ENCODE measurements at regions of chr5 and their contacts with region 1.

Region 1: GRCh38 chr5:69234457-69235268 is at the start of gene CDK7:
- DNase-seq: peak; percentile 88 to 95 (median 90)
- H3K4me3 ChIP-seq: peak within 1 kb of the TSS; percentile 93 to 97
- H3K4me3 Mint-ChIP-seq: peak within 1 kb of the TSS; percentile 92 to 99 (median 98)
- H3K27ac ChIP-seq: peak within 1 kb of the TSS; percentile 91
- H3K27ac Mint-ChIP-seq: peak within 1 kb of the TSS; percentile 83 to 97 (median 96)
- H3K4me1 ChIP-seq: peaks cover 31% of the 10 kb centered on the region
- H3K4me1 Mint-ChIP-seq: peaks cover 26 to 58% (median 40%) of the 10 kb centered on the region in 4 donors
- H3K27me3 ChIP-seq: no peaks in the 10 kb centered on the region
- H3K27me3 Mint-ChIP-seq: no peaks in the 10 kb centered on the region
- total RNA-seq, gene CDK7: 16.5 to 20.2 TPM

Region 2: DNA sequence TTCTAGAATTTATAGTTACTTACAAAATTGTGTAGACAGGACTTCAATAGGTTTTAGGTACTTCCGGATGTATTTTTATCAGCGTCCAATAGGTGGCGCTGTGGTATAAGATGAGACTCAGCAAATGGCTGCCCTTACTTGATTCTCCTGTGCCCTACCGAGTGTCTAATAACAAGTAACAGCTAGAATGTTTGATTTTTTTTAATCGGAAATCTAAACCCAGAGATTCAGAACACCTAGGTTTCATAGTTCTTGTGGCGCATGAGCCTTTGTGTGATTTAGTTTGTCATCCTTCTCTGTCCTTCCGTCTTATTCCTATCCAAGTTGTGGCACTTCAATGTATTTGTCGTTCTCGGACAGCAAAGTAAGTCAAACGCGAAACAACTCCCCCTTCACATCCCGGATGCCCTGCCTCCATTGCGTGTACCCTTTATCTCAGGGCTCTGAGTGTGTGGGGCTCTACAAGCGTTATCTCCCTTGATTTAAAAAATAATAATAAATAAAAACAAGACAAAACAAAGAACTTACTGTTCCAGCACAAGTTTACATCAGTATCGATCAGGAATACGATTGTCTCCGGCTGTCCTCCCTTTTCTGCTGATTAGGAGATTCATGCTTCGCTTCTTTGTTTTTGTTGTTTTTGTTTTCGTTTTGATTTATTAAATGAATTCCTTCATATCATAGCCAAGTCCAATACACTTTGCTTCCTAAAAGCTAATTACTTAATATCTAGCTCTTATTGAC is 191.6 kb before region 1 on chr5:
- CTCF ChIA-PET with region 1: interaction called, 7 read pairs
- POLR2A ChIA-PET with region 1: interaction called, 4 read pairs
- intact Hi-C with region 1: loop called (anchors 5 kb)
- DNase-seq: peak; percentile 84 to 90 (median 88)
- H3K4me3 ChIP-seq: peak overlapping the region; percentile 37 to 62
- H3K4me3 Mint-ChIP-seq: peak overlapping the region; percentile 81 to 96 (median 87)
- H3K27ac ChIP-seq: peak overlapping the region; percentile 54
- H3K27ac Mint-ChIP-seq: peak overlapping the region; percentile 74 to 96 (median 91)
- H3K4me1 ChIP-seq: peaks cover 5% of the 10 kb centered on the region
- H3K4me1 Mint-ChIP-seq: peaks cover 2 to 12% (median 6%) of the 10 kb centered on the region in 4 donors
- H3K27me3 ChIP-seq: no peaks in the 10 kb centered on the region
- H3K27me3 Mint-ChIP-seq: no peaks in the 10 kb centered on the region

Region 3: GRCh38 chr5:69166686-69167492 is 67.8 kb before region 1 on chr5 and contains the start of gene CCNB1:
- CTCF ChIA-PET with region 1: no interaction called
- POLR2A ChIA-PET with region 1: interaction called, 10 read pairs
- intact Hi-C with region 1: loop called (anchors 1 kb)
- DNase-seq: peak; percentile 95 to 97 (median 96)
- H3K4me3 ChIP-seq: peak within 1 kb of the TSS; percentile 47 to 90
- H3K4me3 Mint-ChIP-seq: peak within 1 kb of the TSS; percentile 90 to 96 (median 94)
- H3K27ac ChIP-seq: peak within 1 kb of the TSS; percentile 63
- H3K27ac Mint-ChIP-seq: peak within 1 kb of the TSS; percentile 88 to 97 (median 94)
- H3K4me1 ChIP-seq: peaks cover 20% of the 10 kb centered on the region
- H3K4me1 Mint-ChIP-seq: peaks cover 11 to 29% (median 20%) of the 10 kb centered on the region in 4 donors
- H3K27me3 ChIP-seq: no peaks in the 10 kb centered on the region
- H3K27me3 Mint-ChIP-seq: no peaks in the 10 kb centered on the region
- total RNA-seq, gene CCNB1: 2.9 to 3.4 TPM

Region 4: DNA sequence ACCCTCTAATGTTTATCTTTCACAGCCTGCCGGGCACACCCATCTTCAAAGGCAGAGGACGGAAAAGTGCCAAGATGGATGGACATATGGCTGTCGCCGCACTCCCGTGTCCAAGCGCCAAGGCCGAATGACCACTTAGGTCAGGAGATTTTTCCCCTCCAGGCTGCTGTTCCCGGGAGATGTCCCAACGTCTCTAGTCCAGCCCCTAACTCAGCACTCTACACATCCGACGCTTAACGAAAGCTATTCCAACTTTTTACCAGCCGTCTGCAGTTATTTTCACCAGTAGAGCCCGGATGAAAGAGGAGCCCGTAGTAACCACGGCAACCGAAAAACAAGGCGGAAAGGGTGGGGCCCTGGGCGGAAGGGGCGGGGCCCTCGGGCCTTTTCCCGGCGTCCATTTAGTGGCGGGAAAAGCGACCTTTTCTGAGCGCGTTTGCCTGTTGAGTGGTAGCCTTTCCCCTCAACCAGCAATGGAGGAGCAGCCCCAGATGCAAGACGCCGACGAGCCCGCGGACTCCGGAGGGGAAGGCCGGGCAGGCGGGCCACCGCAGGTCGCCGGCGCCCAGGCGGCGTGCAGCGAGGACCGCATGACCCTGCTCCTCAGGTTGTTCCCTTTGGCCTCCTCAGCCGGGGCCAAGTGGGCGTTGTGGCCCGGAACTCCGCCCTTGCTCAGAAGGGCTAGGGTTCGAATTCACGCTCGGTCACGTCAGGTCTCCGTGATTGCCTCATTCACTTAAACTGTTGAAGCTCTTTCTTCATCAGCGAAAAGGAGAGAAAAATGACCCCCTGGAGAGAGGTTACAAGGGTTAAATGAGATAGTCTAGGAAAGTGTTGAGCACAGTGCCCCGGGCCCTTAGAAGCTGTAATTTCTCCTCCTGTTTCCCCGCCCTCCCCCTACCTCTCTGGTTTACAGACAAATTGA is 45.2 kb before region 1 on chr5 and contains the start of gene CENPH:
- CTCF ChIA-PET with region 1: interaction called, 3 read pairs
- POLR2A ChIA-PET with region 1: interaction called, 17 read pairs
- intact Hi-C with region 1: loop called (anchors 1 kb)
- DNase-seq: peak; percentile 90 to 92 (median 91)
- H3K4me3 ChIP-seq: peak within 1 kb of the TSS; percentile 78
- H3K4me3 Mint-ChIP-seq: peak within 1 kb of the TSS; percentile 89 to 95 (median 92)
- H3K27ac ChIP-seq: peak within 1 kb of the TSS; percentile 68
- H3K27ac Mint-ChIP-seq: peak within 1 kb of the TSS; percentile 90 to 97 (median 96)
- H3K4me1 ChIP-seq: peaks cover 13% of the 10 kb centered on the region
- H3K4me1 Mint-ChIP-seq: peaks cover 5 to 21% (median 14%) of the 10 kb centered on the region in 4 donors
- H3K27me3 ChIP-seq: no peaks in the 10 kb centered on the region
- H3K27me3 Mint-ChIP-seq: no peaks in the 10 kb centered on the region
- total RNA-seq, gene CENPH: 6.1 to 6.9 TPM

Region 5: GRCh38 chr5:69217548-69218526 is 16.8 kb before region 1 on chr5:
- CTCF ChIA-PET with region 1: interaction called, 9 read pairs
- POLR2A ChIA-PET with region 1: interaction called, 81 read pairs
- intact Hi-C with region 1: loop called (anchors 1 kb)
- DNase-seq: peak; percentile 89 to 94 (median 90)
- H3K4me3 ChIP-seq: peak overlapping the region; percentile 67 to 92
- H3K4me3 Mint-ChIP-seq: peak overlapping the region; percentile 96 to 100 (median 98)
- H3K27ac ChIP-seq: peak overlapping the region; percentile 87
- H3K27ac Mint-ChIP-seq: peak overlapping the region; percentile 97 to 100 (median 98)
- H3K4me1 ChIP-seq: peaks cover 22% of the 10 kb centered on the region
- H3K4me1 Mint-ChIP-seq: peaks cover 19 to 27% (median 25%) of the 10 kb centered on the region in 4 donors
- H3K27me3 ChIP-seq: no peaks in the 10 kb centered on the region
- H3K27me3 Mint-ChIP-seq: no peaks in the 10 kb centered on the region

Region 6: DNA sequence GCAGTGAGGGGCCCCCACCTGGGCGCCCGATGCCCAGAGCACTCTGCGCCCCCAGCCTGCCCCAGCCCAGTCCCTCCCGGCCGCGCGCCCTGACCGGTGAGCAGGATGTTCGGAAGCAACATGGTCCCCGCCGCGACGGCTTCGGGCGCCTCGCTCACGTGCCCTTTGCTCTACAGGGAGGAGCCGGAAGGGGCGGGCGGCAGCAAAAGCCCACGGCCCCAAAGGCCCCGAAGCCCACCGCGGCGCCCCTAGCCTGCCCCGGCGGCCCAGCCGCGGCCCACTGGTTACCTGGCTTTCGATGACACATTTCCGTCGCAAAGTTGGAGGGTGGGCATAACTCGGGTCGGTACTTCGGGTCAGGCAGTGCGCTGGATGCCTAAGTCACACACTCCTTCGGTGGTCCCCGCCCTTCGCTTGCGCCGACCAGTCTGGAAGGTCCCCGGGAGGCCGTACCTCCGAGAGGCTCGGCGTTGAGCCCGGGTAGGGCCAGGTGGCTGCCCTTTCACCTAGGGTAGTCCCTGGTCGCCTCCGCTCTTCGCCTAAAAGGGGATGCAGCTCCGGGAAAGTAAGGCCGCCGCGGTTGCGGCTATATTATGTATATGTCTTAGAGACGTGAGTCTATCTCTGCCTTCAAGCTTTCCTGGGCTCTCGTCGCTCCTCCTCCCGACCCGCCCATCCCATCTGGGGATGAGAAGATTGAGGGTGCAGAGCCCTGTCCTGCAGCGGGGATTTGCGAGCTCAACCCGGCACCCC is 134.9 kb after region 1 on chr5 and contains the starts of genes AK6, RAD17 and TAF9:
- CTCF ChIA-PET with region 1: no interaction called
- POLR2A ChIA-PET with region 1: interaction called, 5 read pairs
- intact Hi-C with region 1: loop called (anchors 1 kb)
- DNase-seq: peak; percentile 94 to 98 (median 96)
- H3K4me3 ChIP-seq: peak within 1 kb of the TSS; percentile 67 to 75
- H3K4me3 Mint-ChIP-seq: peak within 1 kb of the TSS; percentile 95 to 99 (median 98)
- H3K27ac ChIP-seq: peak within 1 kb of the TSS; percentile 99
- H3K27ac Mint-ChIP-seq: peak within 1 kb of the TSS; percentile 99 to 100 (median 99)
- H3K4me1 ChIP-seq: peaks cover 29% of the 10 kb centered on the region
- H3K4me1 Mint-ChIP-seq: peaks cover 24 to 67% (median 46%) of the 10 kb centered on the region in 4 donors
- H3K27me3 ChIP-seq: no peaks in the 10 kb centered on the region
- H3K27me3 Mint-ChIP-seq: no peaks in the 10 kb centered on the region
- total RNA-seq, gene AK6: 25.3 to 31.4 TPM
- total RNA-seq, gene RAD17: 30.7 to 31.1 TPM
- total RNA-seq, gene TAF9: 42.3 to 45.9 TPM

Region 7: DNA sequence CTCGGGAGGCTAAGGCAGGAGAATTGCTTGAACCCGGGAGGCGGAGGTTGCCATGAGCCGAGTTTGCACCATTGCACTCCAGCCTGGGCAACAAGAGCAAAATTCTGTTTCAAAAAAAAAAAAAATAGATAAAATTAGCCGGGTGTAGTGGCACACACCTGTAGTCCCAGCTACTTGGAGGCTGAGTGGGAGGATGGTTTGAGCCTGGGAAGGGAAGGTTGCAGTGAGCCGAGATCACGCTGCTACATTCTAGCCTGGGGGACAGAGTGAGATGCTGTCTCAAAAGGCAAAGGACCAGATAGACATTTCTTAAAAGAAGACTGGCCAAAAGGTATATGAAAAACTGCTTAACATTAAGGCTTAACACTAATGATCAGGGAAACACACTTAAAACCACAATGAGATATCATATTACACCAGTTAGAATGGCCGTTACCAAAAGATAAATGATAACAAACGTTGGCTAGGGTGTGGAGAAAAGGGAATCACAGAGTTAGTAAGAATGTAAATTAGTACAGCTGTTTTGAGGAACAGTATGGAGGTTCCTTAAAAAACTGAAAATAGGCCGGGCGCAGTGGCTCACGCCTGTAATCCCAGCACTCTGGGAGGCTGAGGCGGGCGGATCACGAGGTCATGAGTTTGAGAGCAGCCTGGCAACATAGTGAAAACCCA is 170.1 kb after region 1 on chr5:
- CTCF ChIA-PET with region 1: no interaction called
- POLR2A ChIA-PET with region 1: no interaction called
- intact Hi-C with region 1: no loop called
- DNase-seq: no peak
- H3K4me3 ChIP-seq: no peak overlapping the region
- H3K4me3 Mint-ChIP-seq: no peak overlapping the region
- H3K27ac ChIP-seq: no peak overlapping the region
- H3K27ac Mint-ChIP-seq: peak overlapping the region in 1 of 7 donors; percentile 29
- H3K4me1 ChIP-seq: no peaks in the 10 kb centered on the region
- H3K4me1 Mint-ChIP-seq: peaks cover 0 to 2% (median 0%) of the 10 kb centered on the region in 4 donors
- H3K27me3 ChIP-seq: no peaks in the 10 kb centered on the region
- H3K27me3 Mint-ChIP-seq: no peaks in the 10 kb centered on the region

Measured in CD4-positive, alpha-beta memory T cell (primary cell).